Activated CD4-positive, alpha-beta memory T cell treated with anti-CD3 and anti-CD28 coated beads for 36 hours (primary cell): ENCODE measurements at regions of chr10 and their contacts with region 1.

Region 1: GRCh38 chr10:48656241-48656913 is 28.3 kb upstream of the WDFY4 start:
- DNase-seq: peak; percentile 93
- H3K4me3 Mint-ChIP-seq: peak overlapping the region; percentile 64
- H3K27ac Mint-ChIP-seq: no peak overlapping the region
- H3K4me1 Mint-ChIP-seq: peaks cover 5% of the 10 kb centered on the region
- H3K27me3 Mint-ChIP-seq: peaks cover 16% of the 10 kb centered on the region

Region 2: DNA sequence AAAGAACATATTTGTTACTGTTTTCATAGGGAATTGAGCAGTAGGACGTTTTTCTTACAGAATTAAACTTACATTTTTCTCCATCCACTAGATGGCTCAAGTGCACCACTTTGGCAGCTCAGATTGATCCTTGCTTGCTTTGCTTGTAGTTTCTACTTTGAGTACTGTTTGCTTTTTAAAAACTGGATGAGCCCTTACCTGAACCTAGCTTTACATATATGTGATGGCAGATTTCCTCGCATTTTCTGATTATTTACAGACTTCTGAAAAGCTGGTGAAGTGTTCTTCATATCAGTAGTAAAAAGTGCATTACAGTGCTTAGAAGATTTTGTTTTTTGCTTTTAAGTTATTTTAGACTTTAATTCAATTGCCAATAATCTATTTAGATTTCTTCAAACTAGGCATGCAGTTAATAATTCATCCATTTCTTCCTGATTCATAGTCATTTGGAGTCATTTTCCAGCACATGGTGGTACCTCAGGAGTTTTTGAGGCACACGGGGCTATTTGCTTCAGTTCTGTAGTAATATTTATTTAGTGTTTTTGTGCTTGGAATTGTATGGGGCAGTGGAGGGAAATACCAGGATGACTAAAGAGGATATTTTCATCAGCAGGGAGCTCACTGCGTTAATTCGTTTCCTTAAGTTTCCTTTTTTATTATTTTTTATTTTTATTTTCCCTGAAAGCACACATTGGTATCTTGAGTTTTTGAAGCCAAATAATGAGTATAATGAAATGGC is 292.6 kb before region 1 on chr10:
- CTCF ChIA-PET with region 1: interaction called, 95 read pairs
- POLR2A ChIA-PET with region 1: no interaction called
- intact Hi-C with region 1: no loop called
- DNase-seq: peak; percentile 25
- H3K4me3 Mint-ChIP-seq: no peak overlapping the region
- H3K27ac Mint-ChIP-seq: no peak overlapping the region
- H3K4me1 Mint-ChIP-seq: peaks cover 12% of the 10 kb centered on the region
- H3K27me3 Mint-ChIP-seq: no peaks in the 10 kb centered on the region

Region 3: GRCh38 chr10:48551861-48552591 is 104.4 kb before region 1 on chr10:
- CTCF ChIA-PET with region 1: interaction called, 119 read pairs
- POLR2A ChIA-PET with region 1: no interaction called
- intact Hi-C with region 1: loop called (anchors 1 kb)
- DNase-seq: peak; percentile 22
- H3K4me3 Mint-ChIP-seq: no peak overlapping the region
- H3K27ac Mint-ChIP-seq: no peak overlapping the region
- H3K4me1 Mint-ChIP-seq: no peaks in the 10 kb centered on the region
- H3K27me3 Mint-ChIP-seq: no peaks in the 10 kb centered on the region

Region 4: DNA sequence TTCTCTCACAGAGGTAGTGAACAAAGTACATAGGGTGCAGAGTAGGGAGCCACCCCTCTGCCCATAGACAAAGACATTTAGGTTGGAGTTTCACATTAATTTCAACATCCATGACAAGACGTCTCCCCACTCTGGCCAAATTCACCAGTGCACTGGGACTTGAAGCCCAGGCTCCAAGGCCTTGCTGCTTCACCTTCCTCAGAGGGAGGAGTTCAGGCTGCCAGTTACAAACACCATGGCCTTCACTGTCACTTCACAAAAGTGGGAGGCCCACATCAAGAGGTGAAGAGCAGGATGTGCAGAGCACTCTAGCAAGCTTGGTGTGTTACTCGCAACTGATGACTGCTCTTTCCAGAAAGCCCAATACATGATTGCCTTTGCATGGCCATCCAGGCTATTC is 35.7 kb before region 1 on chr10:
- CTCF ChIA-PET with region 1: interaction called, 42 read pairs
- POLR2A ChIA-PET with region 1: no interaction called
- intact Hi-C with region 1: no loop called
- DNase-seq: no peak
- H3K4me3 Mint-ChIP-seq: no peak overlapping the region
- H3K27ac Mint-ChIP-seq: no peak overlapping the region
- H3K4me1 Mint-ChIP-seq: no peaks in the 10 kb centered on the region
- H3K27me3 Mint-ChIP-seq: peaks cover 5% of the 10 kb centered on the region

Region 5: GRCh38 chr10:48670978-48671913 is 14.9 kb after region 1 on chr10:
- CTCF ChIA-PET with region 1: interaction called, 16 read pairs
- POLR2A ChIA-PET with region 1: no interaction called
- intact Hi-C with region 1: no loop called
- DNase-seq: no peak
- H3K4me3 Mint-ChIP-seq: no peak overlapping the region
- H3K27ac Mint-ChIP-seq: no peak overlapping the region
- H3K4me1 Mint-ChIP-seq: no peaks in the 10 kb centered on the region
- H3K27me3 Mint-ChIP-seq: peaks cover 11% of the 10 kb centered on the region

Region 6: DNA sequence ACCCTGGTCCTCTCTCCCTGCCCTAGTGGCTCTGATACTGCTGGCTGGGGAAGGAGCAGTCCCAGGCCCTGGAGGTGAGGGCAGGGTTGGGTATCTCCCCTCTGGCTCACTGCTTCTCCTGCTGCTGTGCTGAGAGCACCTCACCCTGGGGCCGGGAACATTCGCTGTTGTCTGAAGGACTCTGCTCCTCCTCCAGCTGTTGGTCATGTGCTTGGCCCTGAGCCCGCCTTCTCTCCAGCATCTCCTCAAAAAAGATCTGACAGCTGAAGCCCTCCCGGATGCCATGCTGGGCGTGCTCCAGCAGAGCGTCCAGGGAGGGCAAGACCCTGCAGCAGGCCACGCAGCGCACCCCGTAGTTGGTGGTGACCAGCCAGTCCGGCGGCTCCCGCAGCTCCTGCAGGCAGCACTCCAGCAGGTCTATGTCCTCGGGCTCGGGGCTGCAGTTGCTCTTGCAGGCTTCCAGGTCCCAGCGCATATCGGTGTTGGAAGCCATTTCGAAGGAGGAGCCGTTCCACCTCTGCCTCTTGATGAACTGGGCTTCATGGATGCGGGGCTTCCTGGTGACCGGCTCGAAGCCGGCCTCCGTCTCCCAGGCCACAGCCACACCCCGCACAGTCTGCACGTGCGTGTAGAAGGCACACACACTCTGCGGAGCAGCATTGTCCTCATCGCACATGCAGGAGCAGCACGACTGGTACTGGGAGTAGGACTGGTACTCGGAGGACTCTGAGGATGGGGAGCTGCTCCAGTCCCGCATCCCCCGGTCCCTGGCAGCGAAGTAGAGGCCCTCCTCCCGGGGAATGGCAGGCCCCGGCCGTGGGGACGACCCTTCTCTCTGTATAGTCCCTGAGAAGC is 475.4 kb after region 1 on chr10:
- CTCF ChIA-PET with region 1: no interaction called
- POLR2A ChIA-PET with region 1: no interaction called
- intact Hi-C with region 1: no loop called
- DNase-seq: no peak
- H3K4me3 Mint-ChIP-seq: no peak overlapping the region
- H3K27ac Mint-ChIP-seq: no peak overlapping the region
- H3K4me1 Mint-ChIP-seq: no peaks in the 10 kb centered on the region
- H3K27me3 Mint-ChIP-seq: peaks cover 23% of the 10 kb centered on the region

Region 7: DNA sequence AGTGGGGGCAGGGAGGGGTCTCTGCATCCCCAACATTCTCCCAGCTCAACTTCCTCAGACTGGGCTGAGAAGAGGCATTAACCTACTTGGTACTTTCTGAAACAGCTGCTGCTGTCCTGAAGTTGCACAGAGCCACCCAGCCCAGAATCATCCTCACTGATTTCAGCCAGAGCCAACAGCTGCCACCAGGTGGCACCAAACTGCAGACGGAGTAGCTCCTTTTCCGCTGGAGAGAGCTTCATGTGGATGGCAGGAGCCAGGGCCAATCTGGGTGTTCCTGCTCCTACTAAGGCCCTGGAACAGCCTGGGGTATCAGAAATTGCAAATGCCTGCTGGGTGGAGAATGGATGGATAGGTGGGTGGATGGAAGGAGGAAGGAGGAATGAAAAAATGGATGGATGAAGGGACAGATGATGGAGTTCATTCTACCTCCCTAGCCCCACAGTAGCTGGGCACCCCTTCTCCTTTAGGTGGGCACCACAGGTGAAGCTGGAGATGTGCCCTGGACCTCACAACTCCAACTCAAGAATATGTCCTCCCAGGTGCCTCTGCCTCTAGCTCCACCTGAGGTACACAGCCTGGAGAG is 751.3 kb after region 1 on chr10:
- CTCF ChIA-PET with region 1: interaction called, 8 read pairs
- POLR2A ChIA-PET with region 1: no interaction called
- intact Hi-C with region 1: loop called (anchors 5 kb)
- DNase-seq: peak; percentile 79
- H3K4me3 Mint-ChIP-seq: no peak overlapping the region
- H3K27ac Mint-ChIP-seq: no peak overlapping the region
- H3K4me1 Mint-ChIP-seq: no peaks in the 10 kb centered on the region
- H3K27me3 Mint-ChIP-seq: peaks cover 27% of the 10 kb centered on the region

Region 8: DNA sequence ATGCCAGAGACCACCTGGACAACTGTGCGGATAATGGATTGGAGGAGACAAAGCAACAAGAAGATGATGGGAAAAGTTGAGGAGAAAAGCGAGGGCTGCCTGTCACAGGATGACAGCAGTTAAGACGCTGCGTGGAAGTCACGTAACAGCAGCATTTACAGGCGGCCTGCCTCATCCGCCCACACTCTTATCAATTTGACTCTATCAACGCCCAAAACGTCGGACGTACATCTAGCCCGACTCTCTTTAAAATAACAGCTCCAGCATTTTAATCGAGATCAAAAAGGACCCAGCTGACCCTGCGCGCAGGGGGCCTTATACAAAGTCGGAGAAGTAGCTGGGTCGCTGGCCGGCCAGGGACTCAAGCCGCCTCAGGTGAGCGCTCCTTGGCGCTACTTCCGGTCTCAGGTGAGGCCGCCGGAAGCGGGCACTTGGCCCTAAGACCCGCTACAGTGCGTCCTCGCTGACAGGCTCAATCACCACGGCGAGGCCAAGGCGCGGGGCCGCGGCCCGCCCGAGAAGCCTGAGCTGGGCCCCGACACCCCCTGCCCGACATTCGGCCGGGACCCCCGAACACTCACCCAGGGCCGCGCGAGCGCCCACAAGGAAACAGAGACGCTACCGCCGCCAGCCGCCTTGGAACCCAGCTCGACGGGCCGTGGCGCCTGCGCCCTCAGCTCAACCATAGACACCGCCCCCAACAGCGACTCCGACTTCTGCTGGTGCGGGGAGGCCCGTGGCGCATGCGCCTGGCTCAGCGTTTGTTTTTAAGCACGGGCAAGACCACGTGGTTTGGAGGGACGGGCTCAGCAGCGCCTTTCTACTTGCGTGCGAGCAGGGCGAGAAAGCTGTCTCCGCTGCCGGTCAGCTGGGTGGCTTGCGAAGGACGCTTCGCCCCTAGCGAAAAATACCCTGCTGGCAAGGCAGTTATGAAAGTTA is 882.3 kb after region 1 on chr10 and contains the start of gene ERCC6:
- CTCF ChIA-PET with region 1: interaction called, 11 read pairs
- POLR2A ChIA-PET with region 1: no interaction called
- intact Hi-C with region 1: no loop called
- DNase-seq: peak; percentile 98
- H3K4me3 Mint-ChIP-seq: peak within 1 kb of the TSS; percentile 89
- H3K27ac Mint-ChIP-seq: peak within 1 kb of the TSS; percentile 95
- H3K4me1 Mint-ChIP-seq: peaks cover 34% of the 10 kb centered on the region
- H3K27me3 Mint-ChIP-seq: peaks cover 24% of the 10 kb centered on the region
- total RNA-seq, gene ERCC6: 17.5 to 18.8 TPM